ENCODE measurements at regions of chr20 and their contacts with region 1.

Region 1: DNA sequence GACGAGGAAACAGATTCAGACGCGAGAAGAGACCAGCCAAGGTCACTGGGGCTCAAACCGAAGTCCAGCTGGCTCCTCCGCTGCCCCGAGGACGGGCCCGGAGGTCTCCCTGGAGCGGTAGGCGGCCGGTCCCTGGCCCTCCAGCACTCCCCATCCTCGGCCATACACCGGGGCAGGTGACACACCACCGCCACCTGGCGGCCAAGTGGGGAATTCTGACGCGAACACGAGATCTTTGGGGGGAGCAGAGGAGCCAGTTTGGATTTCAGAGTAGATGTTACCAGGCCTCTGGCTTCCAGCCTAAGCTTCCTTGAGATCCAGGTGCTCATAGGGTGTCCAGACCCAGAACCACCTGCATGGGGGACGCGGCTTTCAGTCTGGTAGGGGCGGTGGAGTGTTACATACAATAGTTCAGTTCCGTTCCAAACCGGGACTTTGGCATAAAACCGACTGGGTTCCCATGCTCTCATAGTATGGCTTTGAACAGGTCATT is 16.1 kb downstream of the BPIFB1 start:
- DNase-seq: peak; percentile 89

Region 2: DNA sequence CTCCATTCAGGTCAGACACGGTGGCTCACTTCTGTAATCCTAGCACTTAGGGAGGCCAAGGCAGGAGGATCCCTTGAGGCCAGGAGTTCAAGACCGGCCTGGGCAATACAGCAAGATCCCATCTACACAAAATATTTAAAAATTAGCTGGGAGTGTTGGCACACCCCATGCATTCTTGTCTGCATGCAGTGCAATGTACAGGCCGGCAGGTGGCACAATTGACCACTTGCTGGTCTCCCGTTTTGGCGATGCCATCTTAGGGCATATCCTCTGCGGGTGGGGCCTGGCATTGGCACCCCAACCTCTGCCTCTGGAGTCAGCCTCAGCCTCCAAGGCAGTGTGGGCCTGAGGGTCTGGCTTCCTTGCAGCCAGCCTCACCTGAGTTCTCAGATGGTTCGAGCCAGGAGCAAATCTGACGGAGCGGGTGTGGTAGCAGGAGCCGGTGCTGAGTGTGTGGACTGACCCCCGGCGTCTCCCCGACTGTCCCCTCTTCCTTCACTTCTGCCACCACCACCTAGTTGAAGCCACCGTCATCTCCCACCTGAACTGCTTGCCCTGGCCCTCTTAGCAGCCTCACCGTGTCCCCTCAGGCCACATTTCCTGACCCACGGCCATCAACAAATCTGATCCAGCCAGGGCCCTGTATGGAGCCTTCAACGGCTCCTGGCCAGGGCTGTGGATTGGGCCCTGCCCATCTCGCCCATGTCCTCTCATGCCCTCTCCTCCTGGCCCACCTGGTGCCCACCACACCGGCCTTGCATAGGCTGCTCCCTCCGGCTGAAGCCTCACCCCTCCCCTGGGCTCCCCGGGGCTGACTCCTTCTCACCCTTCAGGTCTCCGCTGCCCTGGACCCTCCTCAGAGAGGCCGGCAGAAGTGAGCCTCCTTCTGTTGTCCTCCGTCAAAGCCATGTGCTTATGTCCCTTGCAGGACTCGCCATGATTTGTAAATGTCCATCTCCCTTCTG is 396.4 kb before region 1 on chr20:
- intact Hi-C with region 1: loop called (anchors 5 to 10 kb)
- DNase-seq: peak; percentile 87

Measured in posterior vena cava (tissue), 2 donors.